ENCODE measurements at regions of chr2 and their contacts with region 1.

Region 1: GRCh38 chr2:44479122-44479887 is 117.6 kb downstream of the CAMKMT start:
- DNase-seq: peak; percentile 61
- ATAC-seq: peak; percentile 100
- H3K4me3 ChIP-seq: no peak overlapping the region
- H3K27ac ChIP-seq: no peak overlapping the region
- H3K4me1 ChIP-seq: no peaks in the 10 kb centered on the region
- H3K27me3 ChIP-seq: no peaks in the 10 kb centered on the region
- CTCF ChIP-seq: peak; percentile 98 to 100 (median 100); a peak in 5 of 6 replicates
- EP300 ChIP-seq: no peak
- POLR2A ChIP-seq: no peak
- RAD21 ChIP-seq: peak; percentile 99

Region 2: GRCh38 chr2:44392338-44392943 is 86.9 kb before region 1 on chr2:
- CTCF ChIA-PET with region 1: interaction called, 68 read pairs
- POLR2A ChIA-PET with region 1: no interaction called
- RAD21 ChIA-PET with region 1: interaction called, 33 read pairs
- SMC1A ChIA-PET with region 1: interaction called, 42 read pairs
- in situ Hi-C with region 1: no loop called
- intact Hi-C with region 1: loop called (anchors 2 kb)
- DNase-seq: no peak
- ATAC-seq: peak; percentile 47; the same call in 2 of the 3 replicates
- H3K4me3 ChIP-seq: no peak overlapping the region
- H3K27ac ChIP-seq: no peak overlapping the region
- H3K4me1 ChIP-seq: no peaks in the 10 kb centered on the region
- H3K27me3 ChIP-seq: no peaks in the 10 kb centered on the region
- CTCF ChIP-seq: peak; percentile 41 to 56 (median 50); a peak in 5 of 6 replicates
- EP300 ChIP-seq: no peak
- POLR2A ChIP-seq: no peak
- RAD21 ChIP-seq: peak; percentile 67

Region 3: DNA sequence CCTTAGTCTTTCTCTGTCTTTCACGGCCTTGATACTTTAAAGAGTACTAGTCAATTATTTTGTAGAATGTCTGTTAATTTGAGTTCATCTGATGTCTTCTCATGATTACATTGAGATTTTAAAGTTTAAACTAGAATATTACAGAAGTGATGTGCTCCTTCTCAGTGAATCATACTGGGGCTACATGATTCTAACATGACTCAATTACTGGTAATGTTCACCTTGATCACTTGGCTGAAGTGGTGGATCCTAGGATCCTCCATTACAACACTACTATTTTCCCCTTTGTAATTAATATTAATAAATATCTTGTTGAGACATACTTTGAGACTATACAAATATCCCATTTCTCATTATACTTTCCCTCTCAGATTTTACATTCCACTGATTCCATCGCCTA is 30.9 kb after region 1 on chr2:
- CTCF ChIA-PET with region 1: interaction called, 17 read pairs
- POLR2A ChIA-PET with region 1: no interaction called
- RAD21 ChIA-PET with region 1: no interaction called
- SMC1A ChIA-PET with region 1: interaction called, 5 read pairs
- in situ Hi-C with region 1: no loop called
- intact Hi-C with region 1: no loop called
- DNase-seq: no peak
- ATAC-seq: no peak
- H3K4me3 ChIP-seq: no peak overlapping the region
- H3K27ac ChIP-seq: no peak overlapping the region
- H3K4me1 ChIP-seq: no peaks in the 10 kb centered on the region
- H3K27me3 ChIP-seq: no peaks in the 10 kb centered on the region
- CTCF ChIP-seq: no peak
- EP300 ChIP-seq: no peak
- POLR2A ChIP-seq: no peak
- RAD21 ChIP-seq: no peak

Region 4: DNA sequence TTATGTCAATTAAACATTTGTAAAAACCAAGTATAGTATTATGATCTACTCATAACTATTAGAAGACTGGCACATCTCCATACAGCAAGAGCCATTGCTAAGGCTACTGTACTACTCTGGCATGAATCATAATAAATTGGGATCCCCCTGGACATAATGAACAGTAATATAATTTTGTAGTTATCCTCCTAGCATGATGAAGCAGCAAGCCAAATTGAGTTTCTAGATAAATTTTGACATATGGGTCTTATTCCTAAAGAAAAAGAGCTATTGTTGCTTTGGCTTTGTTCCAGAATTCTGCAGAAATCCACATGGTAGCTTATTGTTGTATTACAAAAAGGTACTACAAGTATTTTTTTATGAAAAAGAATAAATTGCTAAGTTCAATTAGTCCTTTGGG is 86.8 kb after region 1 on chr2:
- CTCF ChIA-PET with region 1: interaction called, 53 read pairs
- POLR2A ChIA-PET with region 1: no interaction called
- RAD21 ChIA-PET with region 1: interaction called, 30 read pairs
- SMC1A ChIA-PET with region 1: interaction called, 21 read pairs
- in situ Hi-C with region 1: no loop called
- intact Hi-C with region 1: no loop called
- DNase-seq: no peak
- ATAC-seq: no peak
- H3K4me3 ChIP-seq: no peak overlapping the region
- H3K27ac ChIP-seq: no peak overlapping the region
- H3K4me1 ChIP-seq: peaks cover 5% of the 10 kb centered on the region
- H3K27me3 ChIP-seq: no peaks in the 10 kb centered on the region
- CTCF ChIP-seq: no peak
- EP300 ChIP-seq: no peak
- POLR2A ChIP-seq: no peak
- RAD21 ChIP-seq: no peak

Region 5: GRCh38 chr2:44715671-44716081 is 236.4 kb after region 1 on chr2:
- CTCF ChIA-PET with region 1: interaction called, 46 read pairs
- POLR2A ChIA-PET with region 1: no interaction called
- RAD21 ChIA-PET with region 1: interaction called, 15 read pairs
- SMC1A ChIA-PET with region 1: interaction called, 20 read pairs
- in situ Hi-C with region 1: no loop called
- intact Hi-C with region 1: no loop called
- DNase-seq: no peak
- ATAC-seq: peak; percentile 68
- H3K4me3 ChIP-seq: no peak overlapping the region
- H3K27ac ChIP-seq: no peak overlapping the region
- H3K4me1 ChIP-seq: peaks cover 4% of the 10 kb centered on the region; the same call in 1 of the 2 replicates
- H3K27me3 ChIP-seq: no peaks in the 10 kb centered on the region
- CTCF ChIP-seq: peak; percentile 14 to 39 (median 31); a peak in 3 of 6 replicates
- EP300 ChIP-seq: no peak
- POLR2A ChIP-seq: no peak
- RAD21 ChIP-seq: peak; percentile 49

Region 6: GRCh38 chr2:44955593-44956392 is 476.5 kb after region 1 on chr2:
- CTCF ChIA-PET with region 1: interaction called, 321 read pairs
- POLR2A ChIA-PET with region 1: no interaction called
- RAD21 ChIA-PET with region 1: interaction called, 121 read pairs
- SMC1A ChIA-PET with region 1: interaction called, 130 read pairs
- in situ Hi-C with region 1: loop called (anchors 5 kb)
- intact Hi-C with region 1: loop called (anchors 1 kb)
- DNase-seq: no peak
- ATAC-seq: peak; percentile 91
- H3K4me3 ChIP-seq: peak overlapping the region; percentile 57; the same call in 1 of the 2 replicates
- H3K27ac ChIP-seq: no peak overlapping the region
- H3K4me1 ChIP-seq: no peaks in the 10 kb centered on the region; the same call in 1 of the 2 replicates
- H3K27me3 ChIP-seq: peaks cover 6 to 24% of the 10 kb centered on the region in 2 experiments
- CTCF ChIP-seq: peak; percentile 80 to 99 (median 92)
- EP300 ChIP-seq: no peak
- POLR2A ChIP-seq: no peak
- RAD21 ChIP-seq: peak; percentile 91